CD8-positive, alpha-beta memory T cell (primary cell): ENCODE measurements at regions of chr6 and their contacts with region 1.

Region 1: GRCh38 chr6:33344701-33345697 is 27.5 kb upstream of the ZBTB22 start:
- DNase-seq: peak; percentile 58 to 87 (median 84)
- H3K4me3 ChIP-seq: peak overlapping the region; percentile 56
- H3K4me3 Mint-ChIP-seq: peak overlapping the region; percentile 69 to 92 (median 85)
- H3K27ac ChIP-seq: peak overlapping the region; percentile 77
- H3K27ac Mint-ChIP-seq: peak overlapping the region; percentile 85 to 99 (median 97)
- H3K4me1 ChIP-seq: peaks cover 35% of the 10 kb centered on the region
- H3K4me1 Mint-ChIP-seq: peaks cover 39 to 41% (median 40%) of the 10 kb centered on the region in 3 donors
- H3K27me3 ChIP-seq: no peaks in the 10 kb centered on the region
- H3K27me3 Mint-ChIP-seq: peaks cover 0 to 4% of the 10 kb centered on the region in 2 donors

Region 2: DNA sequence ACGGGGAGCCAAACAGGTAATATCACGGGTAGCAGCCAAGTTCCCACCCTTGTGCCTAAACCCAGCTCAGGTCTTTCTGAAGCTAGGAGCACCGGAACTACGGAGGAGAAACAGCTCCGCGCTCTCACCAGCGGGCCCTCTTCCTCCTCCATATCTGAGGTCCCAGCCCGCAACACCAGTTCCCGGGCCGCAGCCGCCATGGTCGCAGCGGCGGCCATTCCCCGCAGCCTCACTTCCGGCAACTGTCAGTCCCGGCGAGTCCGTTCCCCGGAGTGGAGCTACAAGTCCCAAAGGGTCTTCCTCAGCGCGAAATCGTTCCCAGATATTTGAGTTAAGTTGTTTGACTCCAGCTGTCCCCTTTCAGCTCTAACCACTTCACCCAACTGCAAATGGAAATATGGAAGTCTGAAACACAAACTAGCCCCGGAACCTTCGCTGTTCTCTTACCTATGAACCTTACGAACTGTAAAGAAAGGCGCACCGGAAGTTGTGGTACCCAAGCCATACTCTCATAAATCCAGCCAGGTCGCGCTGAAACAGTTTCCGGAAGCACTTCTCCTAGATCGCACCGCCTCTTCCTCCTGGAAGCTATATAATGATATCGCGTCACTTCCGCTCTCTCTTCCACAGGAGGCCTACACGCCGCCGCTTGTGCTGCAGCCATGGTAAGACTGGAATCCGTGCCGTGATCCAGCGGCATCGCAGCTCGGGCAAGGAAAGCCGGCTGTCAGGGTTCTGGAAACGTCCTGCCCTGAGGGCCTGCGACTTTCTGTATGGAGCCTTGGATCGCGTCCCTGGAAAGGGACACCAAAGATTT is 73.3 kb before region 1 on chr6 and contains the starts of genes RPS18 and VPS52:
- CTCF ChIA-PET with region 1: interaction called, 20 read pairs
- POLR2A ChIA-PET with region 1: interaction called, 29 read pairs
- DNase-seq: peak; percentile 83 to 97 (median 94)
- H3K4me3 ChIP-seq: peak within 1 kb of the TSS; percentile 79
- H3K4me3 Mint-ChIP-seq: peak within 1 kb of the TSS; percentile 98 to 100 (median 99)
- H3K27ac ChIP-seq: peak within 1 kb of the TSS; percentile 92
- H3K27ac Mint-ChIP-seq: peak within 1 kb of the TSS; percentile 98 to 100 (median 99)
- H3K4me1 ChIP-seq: peaks cover 49% of the 10 kb centered on the region
- H3K4me1 Mint-ChIP-seq: peaks cover 61 to 75% (median 73%) of the 10 kb centered on the region in 3 donors
- H3K27me3 ChIP-seq: no peaks in the 10 kb centered on the region
- H3K27me3 Mint-ChIP-seq: no peaks in the 10 kb centered on the region
- total RNA-seq, gene RPS18: 3,797 to 3,852 TPM
- total RNA-seq, gene VPS52: 57.2 to 58.5 TPM

Region 3: DNA sequence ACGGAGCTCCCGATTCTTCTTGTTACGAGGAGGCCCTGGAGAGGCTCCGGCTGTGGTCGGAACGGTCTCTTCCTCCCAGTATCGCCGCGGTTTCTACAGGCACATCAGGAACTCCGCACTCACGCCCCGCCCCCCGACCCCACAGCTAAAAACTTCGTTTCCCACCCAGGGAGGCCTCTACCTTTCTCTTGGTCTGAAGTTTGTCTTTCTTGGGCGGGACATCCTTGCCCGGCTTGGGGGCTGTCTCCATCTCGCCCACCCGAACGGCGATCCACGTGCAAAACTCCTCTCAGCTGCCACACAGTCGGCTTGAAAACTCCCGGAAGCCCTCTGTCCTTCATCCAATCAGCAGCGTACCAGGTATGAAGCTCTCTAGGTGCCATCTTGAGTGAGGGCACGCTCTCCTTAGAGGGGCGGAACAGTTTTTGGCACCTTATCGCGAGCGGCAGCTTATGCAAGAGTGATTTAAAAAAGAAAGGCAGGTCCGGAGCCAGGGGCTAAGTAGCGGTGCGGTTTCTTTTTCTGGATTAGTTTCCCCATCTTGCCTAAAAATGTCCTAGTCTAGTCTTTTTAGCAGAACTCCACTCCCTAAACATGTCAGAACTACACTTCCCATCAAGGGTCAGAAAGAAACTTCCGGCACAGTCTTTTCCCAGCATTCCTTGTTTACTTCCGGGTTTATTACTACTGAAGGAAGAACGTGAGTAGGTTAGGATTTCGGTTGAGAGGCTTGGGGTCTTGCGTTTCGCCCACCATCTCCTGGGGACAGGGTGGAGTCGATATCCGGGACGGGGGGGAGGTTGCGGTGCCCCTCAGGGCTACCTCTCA is 55.9 kb before region 1 on chr6 and contains the starts of genes PFDN6 and WDR46:
- CTCF ChIA-PET with region 1: interaction called, 10 read pairs
- POLR2A ChIA-PET with region 1: interaction called, 36 read pairs
- DNase-seq: peak; percentile 65 to 89 (median 84)
- H3K4me3 ChIP-seq: peak within 1 kb of the TSS; percentile 99
- H3K4me3 Mint-ChIP-seq: peak within 1 kb of the TSS; percentile 89 to 99 (median 97)
- H3K27ac ChIP-seq: peak within 1 kb of the TSS; percentile 83
- H3K27ac Mint-ChIP-seq: peak within 1 kb of the TSS; percentile 79 to 99 (median 96)
- H3K4me1 ChIP-seq: peaks cover 24% of the 10 kb centered on the region
- H3K4me1 Mint-ChIP-seq: peaks cover 37 to 52% (median 49%) of the 10 kb centered on the region in 3 donors
- H3K27me3 ChIP-seq: no peaks in the 10 kb centered on the region
- H3K27me3 Mint-ChIP-seq: no peaks in the 10 kb centered on the region
- total RNA-seq, gene PFDN6: 118 to 119 TPM
- total RNA-seq, gene WDR46: 112 to 117 TPM

Region 4: DNA sequence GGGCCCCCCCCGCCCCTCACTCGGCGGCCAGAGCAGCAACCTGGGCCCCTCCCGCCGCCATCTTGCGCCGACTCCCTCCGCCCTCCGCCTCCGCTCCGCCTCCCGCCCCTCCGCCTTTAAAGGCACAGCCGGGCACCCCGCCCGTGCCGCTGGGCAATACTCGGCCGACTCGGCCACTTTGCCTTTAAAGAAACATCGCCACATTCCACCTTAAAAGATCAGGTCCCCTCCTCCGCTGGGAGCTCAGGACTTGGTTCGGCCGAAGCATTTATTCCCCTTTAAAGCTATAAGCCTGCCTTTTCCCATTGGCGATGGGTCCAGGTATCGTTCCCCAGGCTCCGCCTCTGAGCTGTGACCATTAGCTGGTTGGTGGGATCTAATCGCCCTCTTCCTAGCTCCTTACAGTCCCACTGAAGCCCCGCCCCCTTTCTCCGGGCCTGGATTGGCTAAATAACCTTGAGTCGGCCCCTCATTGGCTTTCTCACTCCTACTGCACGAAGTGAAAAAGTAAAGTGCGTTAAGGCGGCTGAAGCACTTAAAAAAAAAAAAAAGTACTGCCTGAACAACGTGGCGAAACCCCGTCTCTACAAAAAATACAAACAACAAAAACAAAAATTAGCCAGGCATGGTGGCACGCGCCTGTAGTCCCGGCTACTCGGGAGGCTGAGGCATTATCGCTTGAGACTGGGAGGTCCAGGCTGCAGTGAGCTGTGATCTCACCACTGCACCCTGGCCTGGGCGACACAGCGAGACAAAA is 27.2 kb before region 1 on chr6 and contains the start of gene ZBTB22:
- CTCF ChIA-PET with region 1: interaction called, 52 read pairs
- POLR2A ChIA-PET with region 1: interaction called, 75 read pairs
- DNase-seq: peak; percentile 94 to 97 (median 96)
- H3K4me3 ChIP-seq: peak within 1 kb of the TSS; percentile 100
- H3K4me3 Mint-ChIP-seq: peak within 1 kb of the TSS; percentile 94 to 100 (median 100)
- H3K27ac ChIP-seq: peak within 1 kb of the TSS; percentile 72
- H3K27ac Mint-ChIP-seq: peak within 1 kb of the TSS; percentile 95 to 99 (median 98)
- H3K4me1 ChIP-seq: peaks cover 66% of the 10 kb centered on the region
- H3K4me1 Mint-ChIP-seq: peaks cover 71 to 84% (median 71%) of the 10 kb centered on the region in 3 donors
- H3K27me3 ChIP-seq: no peaks in the 10 kb centered on the region
- H3K27me3 Mint-ChIP-seq: peaks cover 0 to 3% of the 10 kb centered on the region in 2 donors
- total RNA-seq, gene ZBTB22: 6.9 to 7.8 TPM

Region 5: GRCh38 chr6:33391278-33391921 is 46.4 kb after region 1 on chr6 and contains the start of gene KIFC1:
- CTCF ChIA-PET with region 1: interaction called, 15 read pairs
- POLR2A ChIA-PET with region 1: interaction called, 5 read pairs
- DNase-seq: peak; percentile 99 to 100 (median 99)
- H3K4me3 ChIP-seq: peak within 1 kb of the TSS; percentile 78
- H3K4me3 Mint-ChIP-seq: peak within 1 kb of the TSS; percentile 72 to 88 (median 86)
- H3K27ac ChIP-seq: peak within 1 kb of the TSS; percentile 79
- H3K27ac Mint-ChIP-seq: peak within 1 kb of the TSS; percentile 75 to 98 (median 98)
- H3K4me1 ChIP-seq: peaks cover 22% of the 10 kb centered on the region
- H3K4me1 Mint-ChIP-seq: peaks cover 22 to 37% (median 36%) of the 10 kb centered on the region in 3 donors
- H3K27me3 ChIP-seq: no peaks in the 10 kb centered on the region
- H3K27me3 Mint-ChIP-seq: no peaks in the 10 kb centered on the region
- total RNA-seq, gene KIFC1: 51.6 to 52.7 TPM